ENCODE measurements at regions of chr16 and their contacts with region 1.

Region 1: DNA sequence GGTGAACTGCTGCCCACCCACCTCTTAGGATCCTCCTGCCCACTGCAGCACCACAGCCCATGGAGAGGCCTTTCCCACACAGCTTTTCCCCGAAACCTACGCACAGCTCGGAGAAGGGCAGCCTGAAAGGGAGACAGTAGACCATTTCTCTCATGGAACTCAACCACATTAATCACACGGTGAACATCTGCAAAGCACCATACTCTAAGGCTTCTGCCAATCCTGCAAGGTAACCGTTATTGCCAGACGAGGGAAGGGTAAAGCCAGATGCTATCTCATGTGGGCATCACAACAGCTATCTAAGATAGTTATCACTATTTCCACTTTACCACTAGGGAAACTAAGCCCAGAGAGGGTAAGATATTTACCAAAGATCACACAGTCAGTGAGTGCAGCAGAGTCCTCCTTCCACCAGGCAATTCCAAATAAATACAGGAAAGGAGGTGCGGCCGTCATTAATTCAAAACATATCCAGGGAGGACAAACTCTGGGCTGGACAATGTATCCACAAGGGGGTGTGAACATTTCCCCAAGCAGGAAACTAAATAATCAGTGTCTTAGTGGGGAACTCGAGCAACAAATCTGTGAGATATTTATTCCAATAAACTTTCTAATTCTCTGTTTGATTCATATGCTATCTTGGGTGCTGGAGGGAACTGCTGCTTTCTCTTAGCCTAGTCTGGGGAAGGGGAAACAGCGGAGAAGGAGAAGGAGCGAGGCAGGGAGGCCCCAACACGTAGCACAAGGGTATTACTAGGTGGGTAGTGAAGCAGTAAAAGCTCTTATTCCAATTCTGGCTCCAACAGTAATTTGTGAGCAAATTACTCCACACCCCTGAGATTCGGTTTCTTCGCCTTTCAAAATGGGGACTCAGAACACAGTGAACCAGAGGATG is 723 bp downstream of the TMEM186 start:
- DNase-seq: no peak
- ATAC-seq: no peak; the same call in 1 of the 2 replicates
- H3K4me3 Mint-ChIP-seq: peak overlapping the region; percentile 91
- H3K27ac Mint-ChIP-seq: peak overlapping the region; percentile 87
- H3K4me1 Mint-ChIP-seq: peaks cover 24% of the 10 kb centered on the region
- H3K27me3 Mint-ChIP-seq: no peaks in the 10 kb centered on the region
- CTCF ChIP-seq: no peak

Region 2: DNA sequence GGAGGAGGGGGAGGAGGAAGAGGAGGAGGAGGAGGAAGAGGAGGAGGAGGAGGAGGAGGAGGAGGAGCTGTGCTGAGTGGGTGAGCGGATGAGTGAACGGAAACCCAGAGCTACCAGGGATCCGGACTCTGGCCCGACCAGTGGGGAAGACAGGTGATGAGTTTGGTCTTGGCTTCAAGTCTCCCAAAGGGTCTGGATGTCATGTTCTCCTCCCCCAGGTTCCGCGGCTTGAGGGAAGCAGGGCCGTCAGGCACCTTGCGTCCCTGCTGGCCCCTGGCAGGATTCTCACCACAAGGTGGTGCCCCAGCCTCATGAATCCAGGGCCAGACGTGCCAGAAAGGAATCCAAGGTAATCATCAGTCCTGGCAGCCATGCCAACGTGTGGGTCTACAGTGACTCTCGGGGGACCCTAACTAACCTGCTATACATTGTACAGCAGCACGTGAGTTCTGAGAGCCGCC is 135.8 kb before region 1 on chr16:
- CTCF ChIA-PET with region 1: interaction called, 14 read pairs
- POLR2A ChIA-PET with region 1: no interaction called
- DNase-seq: peak; percentile 76
- ATAC-seq: peak; percentile 80
- H3K4me3 Mint-ChIP-seq: no peak overlapping the region
- H3K27ac Mint-ChIP-seq: no peak overlapping the region
- H3K4me1 Mint-ChIP-seq: peaks cover 13% of the 10 kb centered on the region
- H3K27me3 Mint-ChIP-seq: no peaks in the 10 kb centered on the region; the same call in none of the 2 replicates
- CTCF ChIP-seq: peak; percentile 48

Region 3: DNA sequence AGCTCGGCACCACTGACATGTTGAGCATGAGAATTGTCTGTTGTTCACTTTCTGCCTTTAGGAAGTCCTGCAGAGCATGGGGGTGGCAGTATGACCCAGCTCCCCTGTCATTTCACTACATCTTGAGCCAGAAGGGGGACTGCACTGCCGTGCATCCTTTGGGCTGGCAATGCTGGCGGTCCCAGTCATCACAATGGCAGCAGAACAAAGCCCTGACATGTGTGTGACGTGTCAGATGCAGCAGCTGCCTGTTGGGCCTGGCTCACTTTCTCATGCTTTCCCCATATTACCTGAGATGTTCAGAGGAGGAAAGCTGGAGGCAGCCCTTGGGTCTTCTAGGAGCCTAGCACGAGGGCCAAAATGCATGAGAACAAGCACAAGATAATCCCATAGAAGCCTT is 128.6 kb before region 1 on chr16:
- CTCF ChIA-PET with region 1: interaction called, 14 read pairs
- POLR2A ChIA-PET with region 1: no interaction called
- DNase-seq: no peak
- ATAC-seq: no peak
- H3K4me3 Mint-ChIP-seq: no peak overlapping the region
- H3K27ac Mint-ChIP-seq: no peak overlapping the region
- H3K4me1 Mint-ChIP-seq: peaks cover 17% of the 10 kb centered on the region
- H3K27me3 Mint-ChIP-seq: peaks cover 4% of the 10 kb centered on the region; the same call in 1 of the 2 replicates
- CTCF ChIP-seq: no peak